Posterior cingulate gyrus (tissue), 11 donors: ENCODE measurements at regions of chr18 and their contacts with region 1.

Region 1: DNA sequence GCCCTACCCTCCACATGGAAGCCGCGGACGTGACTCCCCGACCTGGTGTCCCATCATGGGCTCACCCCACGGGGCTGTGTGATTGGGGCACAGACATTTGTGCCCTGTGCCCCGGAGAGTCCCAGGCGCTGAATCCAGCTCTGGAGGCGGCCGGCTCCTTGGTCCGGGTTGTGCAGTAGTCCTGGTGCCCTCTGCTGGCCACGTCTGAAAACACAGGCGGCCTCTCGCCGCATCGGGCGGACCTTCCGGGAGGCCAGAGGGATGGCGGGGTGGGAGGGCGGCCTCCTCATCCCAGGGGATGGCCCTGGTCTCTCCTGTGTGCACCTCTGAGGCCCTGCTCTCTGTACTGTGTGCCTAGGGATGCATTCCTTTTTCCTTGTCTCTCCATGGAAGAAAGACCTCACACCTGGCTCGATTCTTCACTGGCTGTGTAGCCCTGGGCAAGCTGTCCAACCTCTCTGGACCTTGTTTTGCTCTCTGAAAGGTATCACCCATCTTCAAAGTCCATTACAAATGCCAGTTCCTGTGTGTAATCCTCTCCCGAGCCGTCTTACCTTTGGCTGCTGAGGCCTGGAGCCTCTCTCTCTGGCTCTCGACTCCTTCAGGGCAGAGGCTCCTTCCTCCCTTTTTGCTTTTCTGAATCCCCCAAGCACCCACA is 27.6 kb downstream of the CELF4 start:
- DNase-seq: peak; percentile 67 to 97 (median 83)

Region 2: DNA sequence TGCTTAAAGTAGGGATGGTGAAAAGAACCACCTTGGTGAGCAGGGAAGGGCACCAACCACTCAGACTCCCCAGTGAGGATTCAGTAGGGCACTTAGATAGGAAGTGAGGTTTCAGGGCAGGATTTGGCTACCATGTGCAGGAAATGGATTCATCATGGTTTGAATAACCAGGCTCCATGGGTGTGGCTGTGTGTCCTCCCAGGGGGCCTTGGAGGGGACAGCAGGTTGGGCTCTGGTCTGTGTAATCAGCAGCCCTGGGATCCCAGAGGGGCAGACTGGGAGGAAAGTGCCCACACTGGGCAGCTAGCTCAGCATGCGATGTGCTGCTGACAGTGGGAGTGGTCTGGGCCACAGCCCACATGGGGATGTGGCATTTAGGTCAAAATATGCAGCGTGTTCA is 197.0 kb before region 1 on chr18:
- intact Hi-C with region 1: loop called (anchors 5 kb)
- DNase-seq: no peak

Region 3: DNA sequence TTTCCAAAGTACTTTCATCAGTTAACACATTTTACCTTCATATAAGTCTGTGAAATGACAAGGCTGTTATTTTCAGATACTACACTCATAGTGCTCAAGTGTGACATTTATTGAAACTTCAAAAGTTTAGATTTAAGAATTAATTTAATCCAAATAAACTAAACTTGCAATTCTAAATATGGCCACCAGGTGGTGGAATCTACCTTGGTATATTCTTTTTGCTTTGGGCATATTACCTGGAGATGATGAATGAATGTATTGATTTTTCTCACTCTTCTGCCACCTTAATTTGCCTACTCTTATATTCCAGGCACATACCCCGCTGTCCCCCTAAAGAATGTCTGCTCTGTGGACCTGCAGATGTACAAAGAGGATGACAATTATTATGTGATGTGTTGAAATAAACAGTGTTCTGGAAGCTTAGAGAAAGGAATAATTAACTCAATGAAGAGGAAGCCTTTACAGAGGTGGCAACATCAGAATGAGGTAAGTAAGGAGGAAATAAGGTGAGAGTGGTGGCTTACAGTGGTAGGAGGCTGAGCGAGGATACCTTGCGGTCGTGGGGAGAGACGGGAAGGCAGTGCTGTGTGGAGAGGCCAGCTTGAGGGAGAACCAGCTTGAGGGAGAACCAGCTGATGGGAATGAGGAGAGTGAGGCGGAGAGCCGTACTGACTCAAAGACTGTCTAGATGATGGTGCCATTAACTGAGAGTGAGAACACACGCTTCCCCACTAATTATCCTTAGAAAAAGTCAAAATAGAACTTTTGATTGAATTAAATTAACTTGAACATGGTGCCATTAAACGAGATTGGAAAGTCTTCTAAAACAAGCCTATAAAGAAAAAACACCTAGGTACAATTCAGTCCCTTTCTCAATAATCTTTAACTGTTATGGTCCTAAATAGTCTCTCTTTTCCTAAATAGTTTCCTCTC is 151.9 kb before region 1 on chr18:
- intact Hi-C with region 1: loop called (anchors 1 kb)
- DNase-seq: peak in 1 of 10 donors; percentile 27

Region 4: DNA sequence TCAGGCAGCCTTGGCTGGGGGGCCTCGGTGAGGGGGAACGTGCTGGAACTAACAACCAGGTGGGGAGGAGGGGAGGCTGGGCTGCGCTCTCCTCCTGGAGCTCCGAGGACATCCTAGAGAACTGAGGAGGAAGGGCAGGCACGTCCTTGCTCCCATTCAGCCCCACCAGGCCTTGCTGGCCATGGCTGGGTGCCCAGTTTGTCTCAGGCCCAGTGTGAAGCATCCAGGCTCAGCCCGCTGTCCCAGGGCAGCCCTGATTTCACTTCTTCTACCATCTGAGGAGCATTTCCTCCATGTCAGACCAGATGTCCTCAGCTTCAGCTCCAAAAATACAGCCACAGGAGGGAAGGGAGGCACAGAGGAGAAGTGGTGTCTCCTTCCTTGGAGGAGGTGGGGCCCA is 97.8 kb before region 1 on chr18:
- intact Hi-C with region 1: loop called (anchors 5 kb)
- DNase-seq: peak in 3 of 10 donors; percentile 37 to 66 (median 40)

Region 5: GRCh38 chr18:37487400-37487867 is 50.6 kb before region 1 on chr18:
- intact Hi-C with region 1: no loop called
- DNase-seq: peak in 1 of 10 donors; percentile 32

Region 6: GRCh38 chr18:37578886-37579513 is 41.0 kb after region 1 on chr18:
- intact Hi-C with region 1: no loop called
- DNase-seq: peak in 4 of 10 donors; percentile 50 to 84 (median 64)